A673 (cell line): ENCODE measurements at regions of chr18 and their contacts with region 1.

Region 1: GRCh38 chr18:36672437-36673344 is 156.1 kb downstream of the TPGS2 start:
- DNase-seq: peak; percentile 6
- H3K4me3 ChIP-seq: peak overlapping the region; percentile 25
- H3K27ac ChIP-seq: no peak overlapping the region
- H3K4me1 ChIP-seq: no peaks in the 10 kb centered on the region
- H3K27me3 ChIP-seq: peaks cover 19% of the 10 kb centered on the region
- CTCF ChIP-seq: no peak

Region 2: DNA sequence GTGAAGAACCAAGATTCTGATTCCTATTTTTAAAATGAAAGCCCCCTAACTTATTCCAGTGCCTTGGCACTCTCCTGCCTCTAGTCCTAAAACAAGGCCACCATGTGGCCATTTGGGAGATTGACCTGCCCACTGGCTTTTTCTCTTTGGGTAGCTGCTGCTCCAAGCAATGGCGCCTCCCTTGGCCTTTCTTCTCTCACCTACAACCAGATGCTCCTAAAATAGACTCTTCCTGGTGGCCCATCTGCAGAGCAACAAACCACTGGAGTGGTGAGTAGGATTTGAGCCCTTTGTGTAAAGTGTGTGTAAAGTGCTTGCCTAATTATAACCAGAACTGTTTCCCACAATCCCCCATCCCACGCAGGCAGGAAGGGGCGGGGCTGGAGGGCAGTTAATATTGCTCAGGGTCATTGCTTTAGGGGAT is 260.9 kb before region 1 on chr18:
- CTCF ChIA-PET with region 1: no interaction called
- POLR2A ChIA-PET with region 1: no interaction called
- intact Hi-C with region 1: no loop called
- DNase-seq: peak; percentile 43
- H3K4me3 ChIP-seq: no peak overlapping the region
- H3K27ac ChIP-seq: no peak overlapping the region
- H3K4me1 ChIP-seq: no peaks in the 10 kb centered on the region
- H3K27me3 ChIP-seq: no peaks in the 10 kb centered on the region
- CTCF ChIP-seq: peak; percentile 45; the same call in 1 of the 2 replicates

Region 3: GRCh38 chr18:36652503-36652902 is 20.2 kb before region 1 on chr18:
- CTCF ChIA-PET with region 1: no interaction called
- POLR2A ChIA-PET with region 1: no interaction called
- intact Hi-C with region 1: loop called (anchors 2 kb)
- DNase-seq: no peak
- H3K4me3 ChIP-seq: no peak overlapping the region
- H3K27ac ChIP-seq: no peak overlapping the region
- H3K4me1 ChIP-seq: no peaks in the 10 kb centered on the region
- H3K27me3 ChIP-seq: peaks cover 56% of the 10 kb centered on the region
- CTCF ChIP-seq: no peak